CD4-positive, alpha-beta T cell (primary cell): ENCODE measurements at regions of chr17 and their contacts with region 1.

Region 1: DNA sequence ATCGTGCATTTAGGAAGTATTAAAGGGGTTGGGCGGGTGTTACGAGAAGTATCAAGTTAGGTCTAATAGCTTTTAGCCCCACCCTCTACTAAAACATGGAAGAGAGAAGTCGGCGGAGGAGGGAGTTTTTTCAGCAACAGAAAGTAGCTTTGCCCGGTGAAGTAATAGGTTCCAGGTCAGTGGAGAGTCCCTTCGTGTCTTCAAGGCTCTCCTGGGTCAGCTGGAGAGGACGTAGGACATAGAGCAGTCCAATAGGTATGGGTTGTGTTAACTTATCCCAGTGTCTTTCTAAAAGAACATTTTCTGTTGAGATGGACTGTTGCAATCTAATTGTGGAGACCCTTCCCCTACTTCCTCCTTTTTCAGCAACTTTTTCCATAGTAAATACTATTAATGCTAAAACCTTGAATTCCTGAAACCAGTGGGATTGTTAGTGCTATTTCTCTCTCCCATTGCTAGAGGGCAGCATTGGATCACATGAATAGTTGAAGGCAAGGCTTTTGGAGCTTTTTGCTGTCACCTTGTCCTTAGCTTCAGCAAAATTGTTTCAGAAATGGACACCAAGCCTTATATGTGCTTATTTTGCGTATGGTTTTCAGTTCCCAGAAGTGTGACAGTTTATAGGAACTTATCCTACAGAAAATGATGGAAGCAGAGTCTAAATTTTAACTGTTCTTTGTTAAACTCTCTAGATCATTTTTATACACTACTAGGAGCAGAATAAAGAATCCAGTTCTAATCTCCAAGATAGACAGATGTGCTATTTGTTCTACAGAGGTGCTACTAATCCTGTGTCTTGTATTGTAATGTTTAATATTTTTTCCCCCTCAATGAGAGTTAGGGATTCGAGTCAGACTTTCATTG is 38.4 kb downstream of the UTP18 start:
- DNase-seq: peak in 3 of 14 experiments; percentile 20 to 49 (median 49)
- ATAC-seq: no peak
- H3K4me3 ChIP-seq: no peak overlapping the region
- H3K4me3 Mint-ChIP-seq: no peak overlapping the region
- H3K27ac ChIP-seq: no peak overlapping the region
- H3K27ac Mint-ChIP-seq: peak overlapping the region; percentile 5
- H3K4me1 ChIP-seq: no peaks in the 10 kb centered on the region
- H3K4me1 Mint-ChIP-seq: no peaks in the 10 kb centered on the region
- H3K27me3 ChIP-seq: no peaks in the 10 kb centered on the region
- H3K27me3 Mint-ChIP-seq: no peaks in the 10 kb centered on the region
- CTCF ChIP-seq: peak; percentile 72

Region 2: DNA sequence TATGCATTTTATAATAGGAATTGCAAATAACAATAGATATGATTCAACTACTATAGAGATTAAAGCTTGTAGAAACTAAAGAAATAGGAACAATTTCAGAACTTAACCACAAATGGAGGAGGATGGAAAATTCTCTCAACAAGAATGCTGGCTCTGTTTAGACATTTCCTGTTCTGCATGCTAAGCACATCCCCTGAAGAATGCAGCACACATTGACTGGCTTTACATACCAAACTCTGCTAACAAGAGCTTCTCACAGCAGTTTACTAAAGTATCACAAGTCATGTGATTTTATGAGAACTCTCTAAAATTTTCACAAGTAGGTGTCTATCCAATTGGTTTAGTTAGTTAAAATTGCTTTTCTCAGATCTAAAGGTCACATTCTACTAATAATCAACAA is 263.3 kb before region 1 on chr17:
- CTCF ChIA-PET with region 1: no interaction called
- POLR2A ChIA-PET with region 1: no interaction called
- intact Hi-C with region 1: no loop called
- DNase-seq: no peak
- ATAC-seq: no peak
- H3K4me3 ChIP-seq: no peak overlapping the region
- H3K4me3 Mint-ChIP-seq: no peak overlapping the region
- H3K27ac ChIP-seq: no peak overlapping the region
- H3K27ac Mint-ChIP-seq: peak overlapping the region; percentile 12
- H3K4me1 ChIP-seq: peaks cover 5% of the 10 kb centered on the region
- H3K4me1 Mint-ChIP-seq: peaks cover 30% of the 10 kb centered on the region
- H3K27me3 ChIP-seq: no peaks in the 10 kb centered on the region
- H3K27me3 Mint-ChIP-seq: no peaks in the 10 kb centered on the region
- CTCF ChIP-seq: no peak

Region 3: GRCh38 chr17:51540151-51540550 is 241.4 kb after region 1 on chr17:
- CTCF ChIA-PET with region 1: interaction called, 3 read pairs
- POLR2A ChIA-PET with region 1: no interaction called
- intact Hi-C with region 1: loop called in 1 of 2 experiments (anchors 1 kb)
- DNase-seq: peak in 7 of 14 experiments; percentile 0 to 33 (median 30)
- ATAC-seq: peak; percentile 51
- H3K4me3 ChIP-seq: no peak overlapping the region
- H3K4me3 Mint-ChIP-seq: no peak overlapping the region
- H3K27ac ChIP-seq: no peak overlapping the region
- H3K27ac Mint-ChIP-seq: peak overlapping the region; percentile 30
- H3K4me1 ChIP-seq: no peaks in the 10 kb centered on the region
- H3K4me1 Mint-ChIP-seq: peaks cover 15% of the 10 kb centered on the region
- H3K27me3 ChIP-seq: no peaks in the 10 kb centered on the region
- H3K27me3 Mint-ChIP-seq: no peaks in the 10 kb centered on the region
- CTCF ChIP-seq: peak; percentile 51

Region 4: GRCh38 chr17:51640108-51640622 is 341.4 kb after region 1 on chr17:
- CTCF ChIA-PET with region 1: no interaction called
- POLR2A ChIA-PET with region 1: no interaction called
- intact Hi-C with region 1: loop called (anchors 1 to 2 kb)
- DNase-seq: peak in 6 of 14 experiments; percentile 2 to 37 (median 17)
- ATAC-seq: no peak
- H3K4me3 ChIP-seq: no peak overlapping the region
- H3K4me3 Mint-ChIP-seq: no peak overlapping the region
- H3K27ac ChIP-seq: no peak overlapping the region
- H3K27ac Mint-ChIP-seq: no peak overlapping the region
- H3K4me1 ChIP-seq: no peaks in the 10 kb centered on the region
- H3K4me1 Mint-ChIP-seq: no peaks in the 10 kb centered on the region
- H3K27me3 ChIP-seq: peaks cover 0 to 6% of the 10 kb centered on the region in 2 experiments
- H3K27me3 Mint-ChIP-seq: peaks cover 15% of the 10 kb centered on the region
- CTCF ChIP-seq: peak; percentile 54

Region 5: DNA sequence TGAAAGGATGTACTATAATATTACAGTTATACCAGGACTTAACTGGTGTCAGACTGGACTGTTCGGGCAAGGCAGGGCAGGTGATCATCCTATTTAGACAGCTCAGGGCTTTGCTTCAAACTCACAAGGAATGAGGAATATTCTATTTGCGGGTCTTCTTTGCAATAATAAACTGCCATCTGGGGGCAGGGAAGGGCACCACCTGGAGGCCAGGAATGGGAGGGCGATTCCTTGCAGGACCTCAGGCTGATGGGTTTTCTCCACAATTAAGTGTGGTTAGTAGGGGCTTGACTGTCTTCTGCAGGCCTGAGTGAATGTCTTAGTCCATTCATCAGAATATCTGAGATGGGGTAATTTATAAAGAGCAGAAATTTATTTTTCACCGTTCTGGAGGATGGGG is 435.7 kb after region 1 on chr17:
- CTCF ChIA-PET with region 1: no interaction called
- POLR2A ChIA-PET with region 1: no interaction called
- intact Hi-C with region 1: loop called in 1 of 2 experiments (anchors 10 kb)
- DNase-seq: peak in 2 of 14 experiments; percentile 2 to 22
- ATAC-seq: no peak
- H3K4me3 ChIP-seq: no peak overlapping the region
- H3K4me3 Mint-ChIP-seq: no peak overlapping the region
- H3K27ac ChIP-seq: no peak overlapping the region
- H3K27ac Mint-ChIP-seq: no peak overlapping the region
- H3K4me1 ChIP-seq: no peaks in the 10 kb centered on the region
- H3K4me1 Mint-ChIP-seq: no peaks in the 10 kb centered on the region
- H3K27me3 ChIP-seq: peaks cover 0 to 6% of the 10 kb centered on the region in 2 experiments
- H3K27me3 Mint-ChIP-seq: peaks cover 33% of the 10 kb centered on the region
- CTCF ChIP-seq: peak; percentile 13

Region 6: GRCh38 chr17:51764387-51764972 is 465.7 kb after region 1 on chr17:
- CTCF ChIA-PET with region 1: no interaction called
- POLR2A ChIA-PET with region 1: no interaction called
- intact Hi-C with region 1: loop called in 1 of 2 experiments (anchors 10 kb)
- DNase-seq: peak; percentile 2 to 66 (median 10)
- ATAC-seq: peak; percentile 71
- H3K4me3 ChIP-seq: no peak overlapping the region
- H3K4me3 Mint-ChIP-seq: no peak overlapping the region
- H3K27ac ChIP-seq: no peak overlapping the region
- H3K27ac Mint-ChIP-seq: no peak overlapping the region
- H3K4me1 ChIP-seq: no peaks in the 10 kb centered on the region
- H3K4me1 Mint-ChIP-seq: no peaks in the 10 kb centered on the region
- H3K27me3 ChIP-seq: peaks cover 5 to 11% of the 10 kb centered on the region in 2 experiments
- H3K27me3 Mint-ChIP-seq: peaks cover 62% of the 10 kb centered on the region
- CTCF ChIP-seq: peak; percentile 81

Region 7: DNA sequence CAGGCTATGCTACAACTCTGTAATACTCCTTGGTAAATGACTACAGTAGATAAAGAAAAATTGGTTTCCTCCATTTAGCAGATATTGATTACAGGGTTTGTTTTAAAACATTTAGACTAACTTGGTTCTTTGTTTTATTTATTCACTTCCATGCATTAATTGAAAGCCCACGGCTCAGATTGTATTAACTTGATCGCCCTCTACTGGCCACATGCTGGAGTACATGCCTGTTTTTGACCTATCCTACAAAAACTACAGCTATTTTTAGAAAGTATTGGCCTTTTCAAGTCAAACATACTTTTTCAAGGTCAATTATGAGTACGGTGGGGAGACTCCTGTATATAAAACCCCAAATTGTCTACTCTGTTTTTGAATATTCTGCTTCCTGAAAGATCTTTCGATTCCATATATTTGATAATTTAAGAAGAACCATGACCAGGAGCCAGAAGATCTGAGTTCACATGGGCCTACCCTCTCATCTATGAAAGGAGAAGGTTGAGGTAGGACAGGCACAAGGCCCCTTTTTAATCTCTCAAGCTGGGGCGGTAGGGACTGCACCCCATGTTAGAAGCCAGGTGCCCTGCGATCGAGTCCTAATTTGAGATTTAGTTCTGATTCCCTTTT is 808.0 kb after region 1 on chr17:
- CTCF ChIA-PET with region 1: no interaction called
- POLR2A ChIA-PET with region 1: no interaction called
- intact Hi-C with region 1: loop called in 1 of 2 experiments (anchors 5 kb)
- DNase-seq: peak in 8 of 14 experiments; percentile 0 to 48 (median 32)
- ATAC-seq: no peak
- H3K4me3 ChIP-seq: no peak overlapping the region
- H3K4me3 Mint-ChIP-seq: no peak overlapping the region
- H3K27ac ChIP-seq: no peak overlapping the region
- H3K27ac Mint-ChIP-seq: no peak overlapping the region
- H3K4me1 ChIP-seq: no peaks in the 10 kb centered on the region
- H3K4me1 Mint-ChIP-seq: no peaks in the 10 kb centered on the region
- H3K27me3 ChIP-seq: peaks cover 0 to 3% of the 10 kb centered on the region in 2 experiments
- H3K27me3 Mint-ChIP-seq: peaks cover 22% of the 10 kb centered on the region
- CTCF ChIP-seq: peak; percentile 54